ENCODE measurements at regions of chr10 and their contacts with region 1.

Region 1: DNA sequence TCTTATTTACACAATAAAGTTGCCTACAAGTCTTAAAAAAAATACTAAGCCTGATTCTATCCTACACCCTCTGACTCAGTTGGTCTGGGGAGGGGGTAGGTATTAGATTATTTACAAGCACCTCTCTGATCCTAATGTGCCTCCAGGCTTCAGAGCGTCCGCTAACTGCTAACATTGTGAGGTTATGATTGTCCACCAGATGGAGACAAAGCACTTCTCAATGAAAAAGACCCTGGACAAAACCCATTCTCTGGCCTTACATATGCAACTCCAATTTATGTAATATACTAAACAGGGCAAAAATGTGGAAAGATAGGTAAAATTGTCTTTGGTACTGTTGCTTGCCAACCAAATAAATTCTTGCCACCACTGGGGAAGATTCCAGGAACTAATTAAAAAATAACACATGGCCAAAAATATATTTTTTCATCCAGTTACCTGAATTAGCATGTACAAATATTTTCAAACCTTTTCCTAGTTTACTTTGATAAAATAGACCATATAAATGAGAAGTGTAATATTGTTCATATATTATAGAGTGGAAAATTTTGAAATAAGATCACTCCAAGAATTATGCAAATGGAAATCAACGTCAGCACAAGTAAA is 92.4 kb downstream of the KIF20B start:
- DNase-seq: peak; percentile 37
- H3K4me3 Mint-ChIP-seq: no peak overlapping the region
- H3K27ac Mint-ChIP-seq: no peak overlapping the region
- H3K4me1 Mint-ChIP-seq: no peaks in the 10 kb centered on the region
- H3K27me3 Mint-ChIP-seq: peaks cover 13% of the 10 kb centered on the region

Region 2: GRCh38 chr10:89659143-89660131 is 134.3 kb before region 1 on chr10:
- CTCF ChIA-PET with region 1: no interaction called
- intact Hi-C with region 1: no loop called
- DNase-seq: no peak
- H3K4me3 Mint-ChIP-seq: no peak overlapping the region
- H3K27ac Mint-ChIP-seq: no peak overlapping the region
- H3K4me1 Mint-ChIP-seq: no peaks in the 10 kb centered on the region
- H3K27me3 Mint-ChIP-seq: no peaks in the 10 kb centered on the region

Region 3: GRCh38 chr10:89837150-89837888 is 43.6 kb after region 1 on chr10:
- CTCF ChIA-PET with region 1: no interaction called
- intact Hi-C with region 1: loop called (anchors 2 kb)
- DNase-seq: peak; percentile 29
- H3K4me3 Mint-ChIP-seq: peak overlapping the region; percentile 76
- H3K27ac Mint-ChIP-seq: no peak overlapping the region
- H3K4me1 Mint-ChIP-seq: peaks cover 8% of the 10 kb centered on the region
- H3K27me3 Mint-ChIP-seq: peaks cover 9% of the 10 kb centered on the region

Region 4: GRCh38 chr10:90087197-90088007 is 293.6 kb after region 1 on chr10:
- CTCF ChIA-PET with region 1: no interaction called
- intact Hi-C with region 1: loop called (anchors 1 kb)
- DNase-seq: peak; percentile 35
- H3K4me3 Mint-ChIP-seq: no peak overlapping the region
- H3K27ac Mint-ChIP-seq: no peak overlapping the region
- H3K4me1 Mint-ChIP-seq: peaks cover 8% of the 10 kb centered on the region
- H3K27me3 Mint-ChIP-seq: peaks cover 7% of the 10 kb centered on the region

Region 5: GRCh38 chr10:90592638-90593302 is 799.0 kb after region 1 on chr10:
- CTCF ChIA-PET with region 1: no interaction called
- intact Hi-C with region 1: loop called (anchors 1 kb)
- DNase-seq: peak; percentile 26
- H3K4me3 Mint-ChIP-seq: no peak overlapping the region
- H3K27ac Mint-ChIP-seq: no peak overlapping the region
- H3K4me1 Mint-ChIP-seq: no peaks in the 10 kb centered on the region
- H3K27me3 Mint-ChIP-seq: peaks cover 12% of the 10 kb centered on the region

Region 6: DNA sequence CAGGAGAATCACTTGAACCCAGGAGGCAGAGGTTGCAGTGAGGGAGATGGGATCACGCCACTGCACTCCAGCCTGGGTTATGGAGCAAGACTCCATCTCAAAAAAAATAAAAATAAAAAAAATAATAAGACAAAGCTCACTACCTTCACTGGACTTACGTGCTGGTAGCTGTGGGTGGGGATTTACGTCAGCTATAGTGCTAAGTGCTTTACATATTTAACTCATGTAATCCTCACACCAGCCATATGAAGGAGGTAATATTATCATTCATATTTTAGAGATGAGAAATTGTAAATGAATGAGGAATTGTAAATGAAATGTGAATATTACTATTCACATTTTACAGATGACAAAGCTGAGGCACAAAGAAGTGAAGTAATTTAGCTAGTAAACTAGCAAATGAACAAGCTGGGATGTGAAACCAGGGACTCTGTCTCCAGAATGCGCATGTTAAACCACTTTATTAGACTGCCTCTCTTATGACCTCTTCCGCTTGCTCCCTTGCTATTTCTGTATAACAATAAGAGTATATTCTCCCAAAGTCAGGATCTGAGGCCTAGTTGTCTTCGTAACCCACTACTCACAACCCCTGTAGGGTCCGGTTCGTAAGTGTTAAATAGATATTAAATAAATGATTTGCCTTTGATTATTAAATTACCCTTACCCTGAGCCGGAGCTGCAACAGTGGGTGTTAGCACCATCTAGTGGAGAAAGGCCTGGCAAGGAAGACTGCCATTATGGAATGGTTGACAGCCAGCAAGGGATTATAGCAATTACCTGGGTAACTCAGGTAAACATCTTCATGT is 993.8 kb after region 1 on chr10:
- CTCF ChIA-PET with region 1: no interaction called
- intact Hi-C with region 1: loop called (anchors 1 kb)
- DNase-seq: peak; percentile 48
- H3K4me3 Mint-ChIP-seq: no peak overlapping the region
- H3K27ac Mint-ChIP-seq: no peak overlapping the region
- H3K4me1 Mint-ChIP-seq: no peaks in the 10 kb centered on the region
- H3K27me3 Mint-ChIP-seq: peaks cover 4% of the 10 kb centered on the region